ENCODE measurements at regions of chr6 and their contacts with region 1.

Region 1: DNA sequence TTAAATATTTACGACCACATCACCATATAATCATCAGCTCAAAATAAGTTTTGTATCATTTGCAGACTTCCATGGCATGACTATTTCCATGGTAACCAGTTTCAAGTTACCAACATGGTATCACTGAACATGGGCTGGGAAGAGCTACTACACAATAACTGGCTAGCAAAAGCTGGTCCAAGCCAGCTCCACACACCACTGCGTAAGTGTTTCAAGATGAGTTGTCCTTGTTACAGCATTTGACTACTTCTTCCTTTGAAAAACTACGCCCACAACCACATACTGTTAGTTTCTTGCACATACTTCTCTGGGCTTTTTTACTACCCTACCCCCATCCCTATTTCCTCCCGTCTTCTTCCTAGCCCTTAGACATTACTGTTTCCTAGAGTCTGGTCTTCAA is 8.5 kb downstream of the CD164 start:
- DNase-seq: no peak
- H3K4me3 ChIP-seq: no peak overlapping the region
- H3K27ac ChIP-seq: no peak overlapping the region
- H3K4me1 ChIP-seq: peaks cover 13% of the 10 kb centered on the region; the same call in 1 of the 2 replicates
- H3K27me3 ChIP-seq: no peaks in the 10 kb centered on the region
- CTCF ChIP-seq: no peak

Region 2: GRCh38 chr6:109351231-109352130 is 22.3 kb before region 1 on chr6:
- CTCF ChIA-PET with region 1: interaction called, 4 read pairs
- POLR2A ChIA-PET with region 1: interaction called, 10 read pairs
- intact Hi-C with region 1: no loop called
- DNase-seq: no peak
- H3K4me3 ChIP-seq: no peak overlapping the region
- H3K27ac ChIP-seq: no peak overlapping the region
- H3K4me1 ChIP-seq: peaks cover 25% of the 10 kb centered on the region
- H3K27me3 ChIP-seq: no peaks in the 10 kb centered on the region
- CTCF ChIP-seq: no peak

Region 3: GRCh38 chr6:109455502-109456282 is 81.9 kb after region 1 on chr6 and contains the start of gene MICAL1:
- CTCF ChIA-PET with region 1: no interaction called
- POLR2A ChIA-PET with region 1: interaction called, 13 read pairs
- intact Hi-C with region 1: no loop called
- DNase-seq: peak; percentile 45 to 67
- H3K4me3 ChIP-seq: peak within 1 kb of the TSS; percentile 77
- H3K27ac ChIP-seq: no peak within 1 kb of the TSS
- H3K4me1 ChIP-seq: no peaks in the 10 kb centered on the region; the same call in 1 of the 2 replicates
- H3K27me3 ChIP-seq: no peaks in the 10 kb centered on the region
- CTCF ChIP-seq: no peak
- total RNA-seq, gene MICAL1: 10.8 and 17.7 TPM in 2 replicates